Heart right ventricle (tissue), 16 donors: ENCODE measurements at regions of chr17 and their contacts with region 1.

Region 1: GRCh38 chr17:37671824-37672547 is 28.7 kb upstream of the DDX52 start:
- DNase-seq: no peak
- ATAC-seq: no peak
- H3K4me3 ChIP-seq: no peak overlapping the region
- H3K27ac ChIP-seq: no peak overlapping the region
- H3K4me1 ChIP-seq: no peaks in the 10 kb centered on the region
- H3K27me3 ChIP-seq: peaks cover 0 to 6% (median 5%) of the 10 kb centered on the region in 7 donors
- CTCF ChIP-seq: no peak

Region 2: GRCh38 chr17:37791447-37792399 is 119.7 kb after region 1 on chr17:
- intact Hi-C with region 1: loop called in 2 of 10 experiments (anchors 10 kb)
- DNase-seq: no peak
- ATAC-seq: no peak
- H3K4me3 ChIP-seq: no peak overlapping the region
- H3K27ac ChIP-seq: no peak overlapping the region
- H3K4me1 ChIP-seq: no peaks in the 10 kb centered on the region
- H3K27me3 ChIP-seq: peaks cover 0 to 65% (median 39%) of the 10 kb centered on the region in 7 donors
- CTCF ChIP-seq: peak in 8 of 9 donors; percentile 16 to 57 (median 28)